ENCODE measurements at regions of chr6 and their contacts with region 1.

Region 1: GRCh38 chr6:3848925-3849605 is at the start of gene FAM50B:
- DNase-seq: peak; percentile 92
- ATAC-seq: peak; percentile 95
- H3K4me3 ChIP-seq: peak within 1 kb of the TSS; percentile 61
- H3K27ac ChIP-seq: no peak within 1 kb of the TSS
- H3K4me1 ChIP-seq: peaks cover 20% of the 10 kb centered on the region
- H3K27me3 ChIP-seq: no peaks in the 10 kb centered on the region
- CTCF ChIP-seq: peak; percentile 97
- total RNA-seq, gene FAM50B: 8.3 and 10.2 TPM in 2 replicates

Region 2: DNA sequence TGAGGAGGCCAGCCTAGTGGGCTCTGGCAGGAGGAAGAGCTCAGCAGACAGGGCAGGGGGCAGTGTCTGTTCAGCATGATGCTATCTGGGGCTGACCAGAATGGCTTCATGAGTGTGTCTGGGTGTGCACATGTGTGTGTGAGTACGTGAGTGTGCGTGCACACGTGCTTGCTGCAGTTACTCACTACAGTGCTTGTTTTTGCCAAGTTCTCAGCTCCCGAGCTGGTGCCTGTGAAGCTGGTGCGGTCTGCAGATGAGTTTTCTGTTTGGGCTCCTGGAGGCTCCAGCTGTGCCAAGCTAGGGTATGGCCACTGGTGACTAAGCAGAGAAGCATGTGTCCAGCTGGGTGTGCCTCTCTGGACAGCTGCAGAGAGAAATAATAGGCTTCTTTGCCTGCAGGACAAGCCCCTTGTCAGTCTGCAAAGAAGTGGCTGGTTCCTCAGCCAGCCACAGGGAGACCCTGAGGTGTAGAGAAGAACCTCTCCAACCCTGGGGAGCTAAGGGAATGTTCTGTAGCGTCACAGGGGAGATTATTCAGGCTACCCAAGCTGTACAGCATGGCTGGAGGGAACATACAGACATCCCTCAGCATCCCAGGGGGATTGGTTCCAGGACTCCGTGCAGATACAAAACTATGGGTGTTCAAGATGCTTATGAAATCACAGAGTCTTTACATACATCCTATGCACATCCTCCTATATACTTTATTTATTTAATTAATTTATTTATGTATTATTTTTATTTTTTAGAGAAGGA is 40.1 kb before region 1 on chr6:
- CTCF ChIA-PET with region 1: interaction called, 8 read pairs
- POLR2A ChIA-PET with region 1: no interaction called
- intact Hi-C with region 1: loop called (anchors 2 kb)
- DNase-seq: peak; percentile 95
- ATAC-seq: peak; percentile 89
- H3K4me3 ChIP-seq: peak overlapping the region; percentile 10; the same call in 1 of the 2 replicates
- H3K27ac ChIP-seq: peak overlapping the region; percentile 67
- H3K4me1 ChIP-seq: peaks cover 60% of the 10 kb centered on the region
- H3K27me3 ChIP-seq: no peaks in the 10 kb centered on the region
- CTCF ChIP-seq: no peak; the same call in 1 of the 2 replicates

Region 3: GRCh38 chr6:3913077-3913957 is 64.3 kb after region 1 on chr6:
- CTCF ChIA-PET with region 1: interaction called, 14 read pairs
- POLR2A ChIA-PET with region 1: no interaction called
- intact Hi-C with region 1: no loop called
- DNase-seq: peak; percentile 99
- ATAC-seq: peak; percentile 73
- H3K4me3 ChIP-seq: peak overlapping the region; percentile 65
- H3K27ac ChIP-seq: peak overlapping the region; percentile 95
- H3K4me1 ChIP-seq: peaks cover 44% of the 10 kb centered on the region
- H3K27me3 ChIP-seq: no peaks in the 10 kb centered on the region
- CTCF ChIP-seq: no peak

Region 4: DNA sequence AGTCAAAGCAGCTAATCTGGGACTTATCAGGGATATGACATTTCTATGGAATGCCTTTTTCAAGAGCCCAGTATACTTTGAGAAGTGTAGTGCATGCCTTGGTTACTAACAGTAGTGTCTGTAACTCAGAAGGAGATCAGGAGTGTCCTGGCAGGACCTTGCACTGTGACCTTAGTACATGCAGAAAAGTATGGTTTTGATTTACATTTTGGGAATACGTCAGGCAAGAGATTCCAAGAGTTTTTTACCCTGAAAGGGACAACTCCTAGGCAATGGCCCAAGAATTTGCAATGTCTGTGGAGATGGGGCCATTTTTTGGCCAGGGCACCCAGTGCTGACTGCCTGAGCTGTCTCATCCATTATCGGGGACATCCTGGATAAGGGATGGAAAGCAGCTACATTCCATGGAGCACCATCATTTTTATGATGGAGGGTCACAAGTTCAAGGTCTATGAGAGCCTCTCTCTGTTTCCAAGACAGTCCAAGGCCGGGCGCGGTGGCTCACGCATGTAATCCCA is 80.3 kb after region 1 on chr6:
- CTCF ChIA-PET with region 1: interaction called, 18 read pairs
- POLR2A ChIA-PET with region 1: no interaction called
- intact Hi-C with region 1: loop called (anchors 1 kb)
- DNase-seq: no peak
- ATAC-seq: no peak
- H3K4me3 ChIP-seq: no peak overlapping the region
- H3K27ac ChIP-seq: no peak overlapping the region
- H3K4me1 ChIP-seq: peaks cover 5% of the 10 kb centered on the region; the same call in 1 of the 2 replicates
- H3K27me3 ChIP-seq: no peaks in the 10 kb centered on the region
- CTCF ChIP-seq: no peak

Region 5: DNA sequence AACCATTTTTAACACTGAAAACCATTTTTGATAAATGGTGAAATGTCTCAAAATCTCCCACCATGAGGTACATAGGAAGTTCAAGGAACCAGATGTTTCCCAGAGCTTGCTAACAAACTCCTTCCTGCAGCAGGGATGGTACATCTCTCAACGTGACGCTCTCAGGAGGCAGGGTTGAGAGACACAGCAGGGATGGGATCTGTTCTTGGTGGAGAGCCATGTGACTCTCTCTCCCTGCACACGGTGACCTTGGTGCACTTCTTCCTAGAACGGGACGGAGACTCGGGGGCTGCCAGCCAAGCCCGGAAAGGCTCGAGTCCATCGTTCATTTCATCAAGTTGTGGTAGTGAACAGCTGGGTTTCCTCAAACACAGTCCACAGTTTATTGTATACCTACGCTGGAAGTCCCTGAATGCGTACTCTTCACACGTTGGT is 94.3 kb after region 1 on chr6:
- CTCF ChIA-PET with region 1: interaction called, 3 read pairs
- POLR2A ChIA-PET with region 1: interaction called, 23 read pairs
- intact Hi-C with region 1: no loop called
- DNase-seq: no peak
- ATAC-seq: no peak
- H3K4me3 ChIP-seq: no peak overlapping the region
- H3K27ac ChIP-seq: no peak overlapping the region
- H3K4me1 ChIP-seq: peaks cover 12% of the 10 kb centered on the region
- H3K27me3 ChIP-seq: no peaks in the 10 kb centered on the region
- CTCF ChIP-seq: no peak

Region 6: DNA sequence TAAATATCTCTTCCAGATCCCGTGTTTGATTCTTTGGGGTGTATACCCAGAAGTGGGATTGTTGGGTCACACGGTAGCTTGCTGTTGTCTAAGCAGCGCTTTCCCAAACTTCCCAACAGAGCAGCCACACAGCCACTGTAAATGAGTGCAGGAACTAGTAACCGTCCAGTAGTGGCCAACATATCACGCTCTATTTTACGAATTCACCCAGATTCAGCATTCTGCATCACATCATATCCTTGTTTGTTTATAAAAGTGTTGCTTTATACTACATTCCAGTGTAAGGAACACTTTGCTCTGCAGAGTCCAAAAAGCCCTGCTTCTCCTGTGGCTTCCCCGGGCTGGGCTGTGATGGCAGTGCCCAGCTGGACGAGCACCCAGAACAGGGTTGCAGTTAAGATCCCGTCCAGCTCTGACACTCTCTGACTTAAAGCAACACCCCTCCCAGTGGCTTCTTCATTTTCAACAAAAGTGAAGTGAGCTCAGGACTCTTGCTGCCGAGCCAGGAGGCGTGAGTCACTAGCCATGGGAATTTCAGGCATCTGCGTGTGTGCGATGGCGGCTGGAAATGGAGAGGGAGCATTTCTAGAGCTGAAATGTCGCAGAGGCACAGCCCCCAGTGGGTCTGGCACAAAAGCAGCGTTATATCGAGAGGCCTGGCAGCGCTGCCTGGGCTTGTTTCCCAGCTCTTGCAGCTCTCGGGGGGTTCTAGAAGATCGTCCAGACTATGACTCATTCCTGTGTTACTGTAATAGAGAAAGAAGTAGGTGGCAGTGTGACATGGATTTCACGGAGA is 502.7 kb after region 1 on chr6:
- CTCF ChIA-PET with region 1: no interaction called
- POLR2A ChIA-PET with region 1: no interaction called
- intact Hi-C with region 1: no loop called
- DNase-seq: peak; percentile 88
- ATAC-seq: peak; percentile 84
- H3K4me3 ChIP-seq: peak overlapping the region; percentile 61
- H3K27ac ChIP-seq: peak overlapping the region; percentile 81
- H3K4me1 ChIP-seq: peaks cover 39% of the 10 kb centered on the region
- H3K27me3 ChIP-seq: no peaks in the 10 kb centered on the region
- CTCF ChIP-seq: peak; percentile 29; the same call in 1 of the 2 replicates

Measured in PC-3 (cell line).